ENCODE measurements at regions of chr12 and their contacts with region 1.

Region 1: GRCh38 chr12:15443611-15444010 is 121.3 kb downstream of the PTPRO start:
- DNase-seq: no peak
- H3K4me3 ChIP-seq: no peak overlapping the region
- H3K27ac ChIP-seq: no peak overlapping the region
- H3K4me1 ChIP-seq: no peaks in the 10 kb centered on the region
- CTCF ChIP-seq: no peak

Region 2: DNA sequence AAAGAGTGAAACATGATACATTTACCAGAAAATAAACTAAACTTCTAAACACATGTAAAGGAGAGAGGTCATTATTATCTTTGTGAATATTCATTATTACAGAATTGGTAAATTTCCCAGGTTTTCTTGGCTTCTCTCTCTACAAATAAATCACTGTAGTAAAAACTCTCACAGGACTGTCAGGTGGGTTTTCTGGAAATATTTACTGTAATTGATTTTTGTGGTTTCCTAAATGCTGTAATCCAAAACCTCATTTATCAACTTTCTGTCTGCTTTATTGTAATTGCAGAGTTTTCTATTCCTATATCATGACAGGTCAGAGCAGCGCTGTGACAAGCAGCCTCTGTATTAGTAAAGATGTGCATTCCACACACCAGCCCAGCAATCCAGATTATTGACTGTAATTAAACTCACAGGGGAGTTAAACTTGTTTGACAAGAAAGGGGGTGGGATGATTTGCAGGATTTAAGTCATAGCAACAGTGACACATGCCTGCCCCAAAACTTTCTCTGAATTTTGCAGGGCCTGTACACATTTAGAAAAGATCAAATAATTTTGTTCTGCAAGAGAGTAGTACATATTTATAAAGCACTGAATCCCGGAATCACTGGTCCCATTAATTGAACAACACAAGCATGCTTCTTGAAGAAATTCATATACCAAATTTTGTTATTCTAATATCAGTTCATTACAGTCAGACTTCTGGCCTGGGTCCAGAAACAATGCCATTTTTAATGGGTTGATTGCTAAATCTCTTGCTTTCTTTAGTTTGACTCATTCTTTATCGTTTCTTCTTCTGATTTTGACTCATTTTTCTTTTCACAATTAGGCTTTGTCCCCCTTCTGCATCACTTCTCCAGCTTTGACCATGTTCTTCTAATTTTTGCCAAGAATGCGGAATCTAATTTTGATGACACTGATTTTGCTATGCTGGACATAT is 79.1 kb before region 1 on chr12:
- CTCF ChIA-PET with region 1: no interaction called
- POLR2A ChIA-PET with region 1: no interaction called
- intact Hi-C with region 1: loop called (anchors 1 kb)
- DNase-seq: no peak
- H3K4me3 ChIP-seq: no peak overlapping the region
- H3K27ac ChIP-seq: no peak overlapping the region
- H3K4me1 ChIP-seq: no peaks in the 10 kb centered on the region
- CTCF ChIP-seq: no peak

Region 3: DNA sequence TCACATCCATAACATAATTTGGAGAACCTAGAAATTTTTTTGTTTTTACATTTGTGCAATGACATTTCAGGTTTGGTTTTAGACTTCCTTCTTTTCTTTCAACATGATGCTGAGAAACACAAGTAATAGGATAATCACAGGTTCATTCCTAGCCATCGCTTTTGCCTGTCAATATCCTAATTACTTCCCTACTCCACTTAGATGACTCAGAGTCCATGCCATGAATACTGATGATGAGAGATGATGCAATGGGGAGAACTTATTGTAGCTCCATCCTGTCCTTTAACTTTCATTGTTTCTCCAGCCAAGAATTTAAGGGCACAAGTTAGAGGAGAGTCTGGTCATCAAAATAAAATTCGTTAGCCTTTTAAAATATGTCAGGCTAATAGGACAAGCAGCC is 20.0 kb before region 1 on chr12:
- CTCF ChIA-PET with region 1: no interaction called
- POLR2A ChIA-PET with region 1: no interaction called
- intact Hi-C with region 1: no loop called
- DNase-seq: no peak
- H3K4me3 ChIP-seq: no peak overlapping the region
- H3K27ac ChIP-seq: no peak overlapping the region
- H3K4me1 ChIP-seq: no peaks in the 10 kb centered on the region
- CTCF ChIP-seq: no peak

Measured in OCI-LY7 (cell line).